ENCODE measurements at regions of chr14 and their contacts with region 1.

Region 1: DNA sequence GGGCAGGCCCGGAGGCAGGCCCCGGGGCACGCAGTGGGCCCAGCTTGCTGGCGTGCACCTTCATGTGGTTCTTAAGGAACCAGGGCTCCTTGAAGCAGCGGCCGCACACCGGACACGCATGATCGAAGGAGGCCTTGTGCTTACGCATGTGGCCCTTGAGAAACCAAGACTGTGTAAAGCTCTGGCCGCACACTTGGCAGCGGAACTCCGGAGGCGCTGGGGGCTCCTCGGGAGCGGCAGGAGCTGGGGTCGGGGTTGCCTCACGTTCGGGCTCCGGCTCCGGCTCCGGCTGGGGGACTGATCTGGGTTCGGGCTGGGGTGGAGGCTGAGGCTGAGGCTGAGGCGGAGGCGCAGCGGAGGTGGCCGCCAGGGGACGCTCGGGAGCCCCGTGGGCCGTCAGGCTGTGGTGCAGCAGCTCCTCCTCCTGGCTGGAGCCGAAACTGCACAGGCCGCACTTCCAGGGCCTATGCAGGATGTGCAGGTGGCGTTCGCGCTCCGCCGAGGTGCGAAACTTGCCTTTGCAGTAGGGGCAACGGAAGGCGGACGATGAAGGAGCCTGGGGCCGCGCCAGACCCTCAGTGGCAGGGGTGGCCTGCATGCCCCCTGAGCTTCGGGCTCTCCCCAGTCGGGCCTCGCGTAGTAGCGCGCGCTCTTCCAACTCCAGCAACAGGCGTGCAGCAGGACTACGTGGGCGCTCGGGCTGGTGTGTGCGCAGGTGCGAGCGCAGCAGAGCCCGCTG is 6.0 kb downstream of the ZNF219 start:
- DNase-seq: no peak
- H3K4me3 ChIP-seq: no peak overlapping the region
- H3K27me3 ChIP-seq: no peaks in the 10 kb centered on the region
- CTCF ChIP-seq: peak; percentile 100

Region 2: GRCh38 chr14:20998664-20999366 is 93.6 kb before region 1 on chr14 and contains the start of gene SLC39A2:
- CTCF ChIA-PET with region 1: interaction called, 16 read pairs
- POLR2A ChIA-PET with region 1: no interaction called
- DNase-seq: peak; percentile 37
- H3K4me3 ChIP-seq: no peak within 1 kb of the TSS
- H3K27me3 ChIP-seq: no peaks in the 10 kb centered on the region
- CTCF ChIP-seq: no peak
- polyA plus RNA-seq, gene SLC39A2: not detected in 2 replicates

Region 3: GRCh38 chr14:21039585-21040369 is 52.7 kb before region 1 on chr14:
- CTCF ChIA-PET with region 1: interaction called, 24 read pairs
- POLR2A ChIA-PET with region 1: no interaction called
- DNase-seq: no peak
- H3K4me3 ChIP-seq: no peak overlapping the region
- H3K27me3 ChIP-seq: peaks cover 6% of the 10 kb centered on the region
- CTCF ChIP-seq: peak; percentile 59

Region 4: GRCh38 chr14:21071225-21072030 is 21.0 kb before region 1 on chr14:
- CTCF ChIA-PET with region 1: interaction called, 193 read pairs
- POLR2A ChIA-PET with region 1: interaction called, 8 read pairs
- DNase-seq: peak; percentile 71
- H3K4me3 ChIP-seq: peak overlapping the region; percentile 79
- H3K27me3 ChIP-seq: no peaks in the 10 kb centered on the region
- CTCF ChIP-seq: 0 out of 2 replicates have a peak, but pooled peaks have one; percentile 8

Region 5: DNA sequence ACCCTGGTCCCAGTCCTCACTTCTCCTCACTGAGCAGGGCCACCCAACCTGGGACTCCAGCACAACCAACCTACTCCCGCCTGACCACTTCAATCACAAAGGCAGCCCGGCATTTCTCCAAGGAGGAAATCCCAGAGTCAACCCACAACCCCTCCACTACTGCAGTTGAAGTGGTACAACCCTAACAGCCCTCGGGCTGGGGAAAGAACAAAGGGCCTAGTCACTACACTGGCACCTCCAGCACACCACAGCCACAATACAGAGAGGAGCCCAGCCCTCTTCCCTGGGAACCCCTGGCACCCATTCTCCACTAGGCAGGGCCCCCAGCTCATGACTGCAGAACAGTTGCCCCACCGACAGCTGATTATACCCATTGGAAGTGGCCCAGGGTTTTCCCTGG is 77.1 kb after region 1 on chr14:
- CTCF ChIA-PET with region 1: no interaction called
- POLR2A ChIA-PET with region 1: no interaction called
- DNase-seq: no peak
- H3K4me3 ChIP-seq: no peak overlapping the region
- H3K27me3 ChIP-seq: peaks cover 2% of the 10 kb centered on the region; the same call in 1 of the 2 replicates
- CTCF ChIP-seq: no peak

Measured in BJ (cell line).